Naive thymus-derived CD4-positive, alpha-beta T cell (primary cell): ENCODE measurements at regions of chr17 and their contacts with region 1.

Region 1: DNA sequence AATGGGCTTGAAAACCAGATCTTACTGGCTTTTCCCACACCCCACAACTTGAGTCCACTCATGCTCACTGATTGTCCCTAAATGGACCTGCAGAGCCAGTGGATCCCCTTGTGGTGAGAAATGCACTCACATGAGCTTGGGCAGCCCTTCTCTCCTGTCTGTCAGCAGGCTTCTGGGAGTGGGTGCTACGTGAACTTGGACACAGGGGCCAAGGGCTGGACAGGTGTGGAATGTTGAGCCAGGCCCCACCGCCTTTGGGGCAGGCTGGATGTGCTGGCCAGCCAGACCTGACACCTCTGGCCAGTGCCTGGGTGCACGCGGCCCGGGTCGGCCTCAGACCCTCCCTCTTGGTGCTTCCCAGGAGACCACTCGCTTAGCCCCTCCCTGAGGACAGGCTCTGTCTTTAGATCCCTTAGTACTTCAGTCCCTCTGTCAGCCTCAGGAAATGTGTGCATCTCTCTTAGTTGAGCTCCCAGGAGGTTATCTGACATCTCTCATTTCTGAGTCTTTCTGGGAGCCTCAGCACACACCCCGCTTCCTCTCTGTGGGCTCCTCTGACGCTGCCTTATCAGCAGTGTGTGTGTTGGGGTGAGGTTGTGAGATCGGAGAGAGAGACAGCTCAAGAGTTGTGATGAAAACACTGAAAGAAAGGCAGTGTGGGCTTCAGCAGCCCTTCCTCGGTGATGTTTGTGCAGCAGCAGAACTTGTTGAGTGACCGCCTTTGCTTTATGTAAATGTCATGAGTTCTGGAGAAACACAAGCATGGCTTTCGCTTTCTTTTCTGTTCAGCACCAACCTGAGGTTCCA is 117.0 kb downstream of the RAB11FIP4 start:
- DNase-seq: peak in 8 of 9 donors; percentile 66 to 90 (median 85)
- ATAC-seq: peak; percentile 95
- H3K4me3 ChIP-seq: peak overlapping the region; percentile 62
- H3K4me3 Mint-ChIP-seq: peak overlapping the region; percentile 79 to 95 (median 90)
- H3K27ac ChIP-seq: peak overlapping the region; percentile 86
- H3K27ac Mint-ChIP-seq: peak overlapping the region; percentile 94 to 100 (median 97)
- H3K4me1 ChIP-seq: peaks cover 53 to 55% of the 10 kb centered on the region in 2 donors
- H3K4me1 Mint-ChIP-seq: peaks cover 50 to 80% (median 69%) of the 10 kb centered on the region in 7 donors
- H3K27me3 ChIP-seq: no peaks in the 10 kb centered on the region
- H3K27me3 Mint-ChIP-seq: no peaks in the 10 kb centered on the region

Region 2: DNA sequence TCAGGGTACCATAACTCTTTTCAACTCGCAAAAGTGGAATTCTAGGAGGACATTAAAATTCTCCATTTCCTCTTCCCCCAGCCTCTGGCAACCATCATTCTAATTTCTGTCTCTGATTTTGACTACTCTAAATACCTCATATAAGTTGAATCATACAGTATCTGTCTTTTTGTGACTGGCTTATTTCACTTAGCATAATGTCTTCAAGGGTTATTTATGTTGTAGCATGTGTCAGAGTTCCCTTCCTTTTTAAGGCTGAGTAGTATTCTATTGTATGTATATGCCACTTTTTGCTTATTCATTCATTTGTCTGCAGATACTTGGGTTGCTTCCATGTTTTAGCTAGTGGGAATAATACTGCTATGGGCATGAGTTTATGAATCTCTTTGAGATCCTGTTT is 525.6 kb before region 1 on chr17:
- CTCF ChIA-PET with region 1: no interaction called
- POLR2A ChIA-PET with region 1: no interaction called
- intact Hi-C with region 1: no loop called
- DNase-seq: no peak
- ATAC-seq: no peak
- H3K4me3 ChIP-seq: no peak overlapping the region
- H3K4me3 Mint-ChIP-seq: no peak overlapping the region
- H3K27ac ChIP-seq: no peak overlapping the region
- H3K27ac Mint-ChIP-seq: no peak overlapping the region
- H3K4me1 ChIP-seq: no peaks in the 10 kb centered on the region
- H3K4me1 Mint-ChIP-seq: peaks cover 0 to 5% (median 0%) of the 10 kb centered on the region in 7 donors
- H3K27me3 ChIP-seq: no peaks in the 10 kb centered on the region
- H3K27me3 Mint-ChIP-seq: no peaks in the 10 kb centered on the region

Region 3: DNA sequence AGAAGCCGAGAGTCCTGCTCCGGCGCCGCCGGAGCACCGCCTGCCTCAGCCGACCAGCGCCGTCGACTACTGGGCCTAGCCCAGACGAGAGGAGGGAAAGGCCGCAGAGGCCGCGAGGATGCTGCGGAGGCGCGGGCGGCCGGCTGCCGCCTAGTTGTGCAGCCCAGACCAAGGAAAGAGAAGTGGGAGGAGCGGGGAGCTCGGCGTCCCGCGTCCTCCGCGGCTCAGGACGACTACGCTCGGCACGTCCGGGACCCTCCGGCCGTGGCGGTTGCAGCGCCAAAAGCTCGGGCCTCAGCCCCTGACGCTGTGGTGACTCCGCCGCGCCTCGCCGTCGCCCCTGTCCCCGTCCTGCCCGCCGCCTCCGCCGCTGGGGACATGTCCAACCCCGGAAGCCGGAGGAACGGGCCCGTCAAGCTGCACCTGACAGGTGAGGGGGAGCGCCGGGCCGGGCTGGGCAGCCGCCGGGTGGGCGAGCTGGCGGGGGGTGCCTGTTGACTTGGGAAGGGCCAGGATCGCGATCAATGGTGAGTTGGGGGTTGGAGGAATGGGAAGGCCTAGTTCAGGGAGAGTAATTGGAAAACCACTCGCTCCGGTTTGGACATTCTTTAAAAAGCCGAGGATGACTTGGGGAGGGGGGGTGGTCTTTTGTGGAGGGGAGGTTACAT is 500.0 kb before region 1 on chr17:
- CTCF ChIA-PET with region 1: no interaction called
- POLR2A ChIA-PET with region 1: no interaction called
- intact Hi-C with region 1: loop called in 1 of 2 experiments (anchors 5 kb)
- DNase-seq: peak; percentile 16 to 60 (median 40)
- ATAC-seq: peak; percentile 77
- H3K4me3 ChIP-seq: peak overlapping the region; percentile 75
- H3K4me3 Mint-ChIP-seq: peak overlapping the region; percentile 86 to 97 (median 92)
- H3K27ac ChIP-seq: peak overlapping the region; percentile 61
- H3K27ac Mint-ChIP-seq: peak overlapping the region; percentile 21 to 94 (median 88)
- H3K4me1 ChIP-seq: peaks cover 0 to 9% of the 10 kb centered on the region in 2 donors
- H3K4me1 Mint-ChIP-seq: peaks cover 8 to 23% (median 18%) of the 10 kb centered on the region in 7 donors
- H3K27me3 ChIP-seq: no peaks in the 10 kb centered on the region
- H3K27me3 Mint-ChIP-seq: peaks cover 0 to 31% (median 0%) of the 10 kb centered on the region in 5 donors

Region 4: DNA sequence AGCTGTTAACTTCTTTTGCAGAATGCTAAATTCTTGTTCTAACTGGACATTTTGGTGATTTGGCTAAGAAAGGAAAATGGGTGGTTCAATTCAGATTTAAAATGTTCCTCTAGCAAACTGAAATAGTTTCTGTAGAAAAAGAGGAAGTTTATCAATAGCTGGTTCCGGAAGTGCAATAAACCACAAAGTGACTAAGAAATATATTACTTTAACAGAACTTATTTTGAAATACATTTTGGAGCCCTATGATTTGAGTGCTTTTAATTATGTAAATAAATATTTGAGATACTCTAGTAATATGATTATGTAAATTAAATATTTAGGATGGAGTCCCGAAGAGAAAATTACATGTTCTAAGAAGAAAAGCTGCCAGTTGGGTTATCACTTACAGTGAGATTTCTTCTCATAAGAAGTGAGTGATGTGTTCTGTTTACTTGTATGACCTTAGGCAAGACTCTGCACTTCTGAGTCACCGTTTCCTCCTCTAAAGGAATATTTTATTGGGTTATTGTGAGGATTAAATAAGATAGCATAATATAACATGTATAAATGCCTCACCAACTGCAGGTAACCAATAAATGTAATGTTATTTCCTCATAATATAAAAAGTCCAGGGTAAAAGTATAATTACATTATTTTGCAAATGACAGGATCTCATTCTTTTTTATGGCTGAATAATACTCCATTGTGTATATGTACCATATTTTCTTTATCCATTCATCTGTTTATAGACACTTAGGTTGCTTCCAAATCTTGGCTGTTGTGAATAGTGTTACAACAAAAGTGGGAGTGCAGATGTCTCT is 194.3 kb before region 1 on chr17 and contains the start of gene EVI2B:
- CTCF ChIA-PET with region 1: no interaction called
- POLR2A ChIA-PET with region 1: interaction called, 11 read pairs
- intact Hi-C with region 1: loop called in 1 of 2 experiments (anchors 2 kb)
- DNase-seq: peak in 7 of 9 donors; percentile 51 to 73 (median 69)
- ATAC-seq: peak; percentile 46
- H3K4me3 ChIP-seq: peak within 1 kb of the TSS; percentile 63
- H3K4me3 Mint-ChIP-seq: peak within 1 kb of the TSS; percentile 85 to 98 (median 92)
- H3K27ac ChIP-seq: peak within 1 kb of the TSS; percentile 82
- H3K27ac Mint-ChIP-seq: peak within 1 kb of the TSS; percentile 84 to 98 (median 95)
- H3K4me1 ChIP-seq: peaks cover 27 to 41% of the 10 kb centered on the region in 2 donors
- H3K4me1 Mint-ChIP-seq: peaks cover 31 to 52% (median 44%) of the 10 kb centered on the region in 7 donors
- H3K27me3 ChIP-seq: no peaks in the 10 kb centered on the region
- H3K27me3 Mint-ChIP-seq: peaks cover 0 to 2% (median 0%) of the 10 kb centered on the region in 5 donors
- total RNA-seq, gene EVI2B: 57.8 to 154 (median 134) TPM

Region 5: DNA sequence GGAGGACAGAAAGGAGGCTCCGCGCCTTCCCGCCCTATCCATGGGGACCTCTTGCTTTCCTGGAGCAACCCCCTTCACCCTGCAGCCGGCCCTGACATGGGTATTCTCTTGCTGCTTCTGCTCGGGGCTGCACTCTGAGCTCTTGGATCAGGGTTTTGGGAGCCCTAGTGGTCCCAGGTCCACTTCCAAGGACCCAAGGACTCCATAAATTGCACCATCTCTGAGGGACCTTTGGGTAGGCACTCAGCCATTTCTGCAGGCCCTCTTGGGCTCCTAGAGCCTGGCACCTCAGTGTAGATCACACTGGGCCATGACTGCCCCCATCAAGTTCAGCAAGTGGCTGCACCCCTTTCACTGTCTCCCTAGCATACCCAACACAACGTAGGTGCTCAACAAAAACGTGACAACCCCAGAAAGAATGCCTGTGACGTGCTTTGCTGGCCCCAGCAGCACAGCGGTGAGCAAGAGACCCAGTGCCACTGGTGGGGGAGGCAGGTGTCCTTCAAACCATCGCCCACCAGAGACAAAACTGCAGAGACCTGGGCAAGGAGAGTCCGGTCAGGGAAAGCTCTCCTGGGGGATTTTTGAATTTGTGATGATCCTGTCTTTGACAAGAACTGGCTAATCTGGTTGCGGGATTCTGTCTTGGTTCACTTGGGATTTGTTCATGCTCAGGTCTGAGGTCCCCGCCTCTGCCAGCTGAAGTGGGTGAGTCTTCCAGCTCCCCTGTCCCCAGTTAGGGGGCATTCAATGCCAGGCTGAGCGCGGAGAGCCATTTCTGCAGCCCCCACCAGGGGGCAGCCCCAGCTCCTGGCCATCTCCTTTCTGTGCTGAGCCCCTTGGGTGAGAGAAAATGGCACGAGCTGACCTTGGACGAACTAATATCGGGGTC is 119.5 kb before region 1 on chr17:
- CTCF ChIA-PET with region 1: interaction called, 6 read pairs
- POLR2A ChIA-PET with region 1: no interaction called
- intact Hi-C with region 1: loop called in 1 of 2 experiments (anchors 5 kb)
- DNase-seq: peak in 7 of 9 donors; percentile 15 to 52 (median 38)
- ATAC-seq: peak; percentile 67
- H3K4me3 ChIP-seq: no peak overlapping the region
- H3K4me3 Mint-ChIP-seq: peak overlapping the region in 2 of 10 donors; percentile 21 to 56
- H3K27ac ChIP-seq: no peak overlapping the region
- H3K27ac Mint-ChIP-seq: no peak overlapping the region
- H3K4me1 ChIP-seq: no peaks in the 10 kb centered on the region
- H3K4me1 Mint-ChIP-seq: peaks cover 10 to 17% (median 16%) of the 10 kb centered on the region in 7 donors
- H3K27me3 ChIP-seq: no peaks in the 10 kb centered on the region
- H3K27me3 Mint-ChIP-seq: peaks cover 22 to 50% (median 28%) of the 10 kb centered on the region in 5 donors

Region 6: DNA sequence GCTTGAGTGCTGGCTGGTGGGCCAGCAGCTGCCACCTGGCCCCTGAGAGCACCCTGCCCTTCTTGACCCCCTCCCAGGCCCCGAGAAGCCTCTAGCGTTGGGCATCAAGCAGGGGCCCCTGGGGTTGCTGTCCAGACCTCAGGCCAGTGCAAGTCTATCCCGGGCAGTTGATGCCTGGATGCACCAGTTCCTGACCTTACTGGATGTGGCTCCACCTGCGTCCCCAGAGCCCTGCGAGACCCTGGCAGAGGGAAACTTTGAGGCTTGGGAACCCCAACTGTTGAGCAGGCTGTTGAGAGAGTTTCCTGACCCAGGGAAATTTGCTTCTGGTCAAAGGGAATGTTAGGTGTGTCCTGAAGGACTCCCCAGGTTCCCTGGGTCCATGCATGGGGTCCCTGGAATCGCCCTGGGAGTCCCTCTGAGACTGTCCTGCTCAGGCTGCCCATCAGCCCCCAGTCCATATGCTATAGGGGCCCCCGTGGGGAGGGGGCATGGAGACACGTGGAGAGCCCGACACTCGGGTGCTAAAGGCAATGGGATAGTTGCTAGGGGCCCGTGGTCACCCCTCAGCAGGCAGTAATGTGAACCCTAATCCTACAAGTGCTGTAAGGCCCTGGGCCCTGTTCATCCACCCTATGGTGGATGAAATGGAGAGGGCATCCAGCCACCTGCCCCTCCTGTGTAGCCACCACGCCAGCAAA is 70.6 kb before region 1 on chr17:
- CTCF ChIA-PET with region 1: interaction called, 5 read pairs
- POLR2A ChIA-PET with region 1: interaction called, 10 read pairs
- intact Hi-C with region 1: loop called in 1 of 2 experiments (anchors 1 kb)
- DNase-seq: no peak
- ATAC-seq: no peak
- H3K4me3 ChIP-seq: no peak overlapping the region
- H3K4me3 Mint-ChIP-seq: no peak overlapping the region
- H3K27ac ChIP-seq: no peak overlapping the region
- H3K27ac Mint-ChIP-seq: no peak overlapping the region
- H3K4me1 ChIP-seq: peaks cover 8% of the 10 kb centered on the region in 2 donors
- H3K4me1 Mint-ChIP-seq: peaks cover 0 to 17% (median 15%) of the 10 kb centered on the region in 7 donors
- H3K27me3 ChIP-seq: no peaks in the 10 kb centered on the region
- H3K27me3 Mint-ChIP-seq: peaks cover 0 to 13% (median 0%) of the 10 kb centered on the region in 5 donors

Region 7: GRCh38 chr17:31494259-31495021 is 14.1 kb before region 1 on chr17:
- CTCF ChIA-PET with region 1: interaction called, 32 read pairs
- POLR2A ChIA-PET with region 1: interaction called, 176 read pairs
- intact Hi-C with region 1: loop called (anchors 1 kb)
- DNase-seq: peak in 8 of 9 donors; percentile 53 to 82 (median 73)
- ATAC-seq: peak; percentile 82
- H3K4me3 ChIP-seq: peak overlapping the region; percentile 33
- H3K4me3 Mint-ChIP-seq: peak overlapping the region; percentile 76 to 98 (median 90)
- H3K27ac ChIP-seq: peak overlapping the region; percentile 90
- H3K27ac Mint-ChIP-seq: peak overlapping the region; percentile 95 to 98 (median 97)
- H3K4me1 ChIP-seq: peaks cover 71 to 84% of the 10 kb centered on the region in 2 donors
- H3K4me1 Mint-ChIP-seq: peaks cover 81 to 100% (median 94%) of the 10 kb centered on the region in 7 donors
- H3K27me3 ChIP-seq: no peaks in the 10 kb centered on the region
- H3K27me3 Mint-ChIP-seq: no peaks in the 10 kb centered on the region

Region 8: GRCh38 chr17:31524926-31525800 is 16.7 kb after region 1 on chr17:
- CTCF ChIA-PET with region 1: interaction called, 11 read pairs
- POLR2A ChIA-PET with region 1: interaction called, 5 read pairs
- intact Hi-C with region 1: loop called in 1 of 2 experiments (anchors 1 kb)
- DNase-seq: peak; percentile 67 to 89 (median 77)
- ATAC-seq: peak; percentile 87
- H3K4me3 ChIP-seq: no peak overlapping the region
- H3K4me3 Mint-ChIP-seq: no peak overlapping the region
- H3K27ac ChIP-seq: no peak overlapping the region
- H3K27ac Mint-ChIP-seq: peak overlapping the region in 1 of 9 donors; percentile 11
- H3K4me1 ChIP-seq: no peaks in the 10 kb centered on the region
- H3K4me1 Mint-ChIP-seq: peaks cover 0 to 2% (median 0%) of the 10 kb centered on the region in 7 donors
- H3K27me3 ChIP-seq: no peaks in the 10 kb centered on the region
- H3K27me3 Mint-ChIP-seq: no peaks in the 10 kb centered on the region

Region 9: DNA sequence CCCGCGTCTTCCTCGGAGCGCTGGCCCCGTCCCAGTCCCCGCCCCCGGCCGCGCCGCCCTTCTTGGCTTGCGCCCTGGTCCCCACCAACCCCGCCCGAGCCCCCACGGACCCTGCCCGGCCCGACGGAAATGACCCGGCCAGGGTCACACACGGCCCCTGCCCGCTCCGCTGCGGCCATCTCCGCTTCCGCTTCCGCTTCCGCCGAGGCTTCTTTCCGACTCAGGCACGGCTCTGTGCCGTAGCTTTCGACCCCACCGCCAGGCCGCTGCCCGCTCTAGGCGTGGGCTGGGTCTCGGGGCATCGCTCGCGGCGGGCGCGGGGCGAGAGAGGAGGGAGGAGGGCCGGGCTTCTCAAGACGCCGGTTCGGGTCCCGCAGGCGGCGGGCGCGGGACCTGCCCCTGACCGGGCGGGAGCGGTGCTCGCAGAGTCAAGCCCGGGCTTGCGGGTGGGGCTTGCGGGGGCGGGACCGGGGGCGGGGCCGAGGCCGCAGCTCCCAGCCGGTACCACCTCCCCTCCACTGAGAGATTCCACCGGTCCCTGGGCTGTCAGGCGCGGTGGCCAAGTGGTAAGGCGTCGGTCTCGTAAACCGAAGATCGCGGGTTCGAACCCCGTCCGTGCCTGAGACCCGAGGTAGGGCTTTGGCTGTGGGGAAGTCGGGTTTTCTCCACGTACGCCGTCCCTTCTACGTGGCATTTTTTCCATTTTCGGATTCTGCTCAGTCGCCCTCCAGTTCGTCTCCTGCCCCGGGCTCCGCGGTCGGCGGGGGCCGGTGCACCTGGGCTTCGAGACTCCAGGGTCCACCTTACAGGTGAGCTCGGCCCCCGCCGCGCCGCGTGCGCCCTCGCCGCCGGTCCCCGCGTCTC is 41.3 kb after region 1 on chr17:
- CTCF ChIA-PET with region 1: no interaction called
- POLR2A ChIA-PET with region 1: no interaction called
- intact Hi-C with region 1: no loop called
- DNase-seq: peak; percentile 75 to 98 (median 85)
- ATAC-seq: peak; percentile 93
- H3K4me3 ChIP-seq: peak overlapping the region; percentile 77
- H3K4me3 Mint-ChIP-seq: peak overlapping the region; percentile 84 to 94 (median 92)
- H3K27ac ChIP-seq: peak overlapping the region; percentile 75
- H3K27ac Mint-ChIP-seq: peak overlapping the region; percentile 71 to 93 (median 84)
- H3K4me1 ChIP-seq: peaks cover 0 to 8% of the 10 kb centered on the region in 2 donors
- H3K4me1 Mint-ChIP-seq: peaks cover 8 to 25% (median 18%) of the 10 kb centered on the region in 7 donors
- H3K27me3 ChIP-seq: no peaks in the 10 kb centered on the region
- H3K27me3 Mint-ChIP-seq: peaks cover 0 to 24% (median 0%) of the 10 kb centered on the region in 5 donors